ENCODE measurements at regions of chr10 and their contacts with region 1.

Region 1: DNA sequence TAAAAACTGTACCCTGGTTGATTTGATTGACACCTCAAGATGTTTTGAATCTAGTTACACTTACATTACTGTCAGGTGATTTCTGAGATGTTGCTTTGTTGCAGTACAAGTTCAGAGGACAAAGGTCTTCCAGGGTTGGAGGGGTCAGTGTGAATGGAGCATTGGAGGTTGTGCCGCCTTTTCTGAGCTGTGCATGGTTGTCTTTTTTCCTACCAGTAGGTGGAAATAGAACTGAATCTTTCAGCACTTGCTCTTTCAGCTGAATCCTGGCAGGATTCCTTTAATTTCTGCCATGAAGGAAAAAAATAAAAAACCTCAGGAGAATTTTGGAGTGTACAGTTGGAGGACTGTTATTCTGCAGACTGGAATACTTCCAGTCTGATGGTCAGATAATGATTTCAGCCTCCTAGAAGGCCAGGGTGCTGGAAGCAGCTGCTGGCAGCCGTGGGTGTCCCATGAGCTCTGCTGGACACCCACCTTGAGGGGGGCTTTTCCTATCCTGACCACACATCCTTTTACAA is 82.7 kb downstream of the PLCE1 start:
- DNase-seq: peak in 1 of 7 donors; percentile 7
- H3K4me3 ChIP-seq: no peak overlapping the region
- H3K27ac ChIP-seq: no peak overlapping the region
- H3K4me1 ChIP-seq: peaks cover 0 to 8% of the 10 kb centered on the region in 2 donors
- H3K27me3 ChIP-seq: no peaks in the 10 kb centered on the region
- CTCF ChIP-seq: peak; percentile 28 to 70 (median 59)
- POLR2A ChIP-seq: no peak

Region 2: DNA sequence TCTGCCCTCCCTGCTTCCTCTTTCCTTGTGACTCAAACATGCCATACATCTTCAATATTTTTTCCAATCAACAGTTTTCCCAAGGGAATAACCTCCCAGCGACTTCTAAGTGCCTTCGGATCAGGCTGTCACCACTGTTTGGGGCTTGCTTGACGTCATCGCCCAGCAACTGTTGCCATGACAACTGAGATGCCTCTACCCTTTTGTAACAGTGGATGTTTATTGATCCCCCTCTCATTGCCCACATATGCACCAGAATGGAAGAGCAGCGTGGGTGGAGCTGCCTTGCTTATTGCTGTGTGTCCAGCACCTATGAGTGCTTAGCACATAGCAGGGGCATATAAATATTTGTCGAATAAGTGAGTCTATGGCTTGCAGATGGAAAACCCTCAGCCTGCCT is 495.6 kb before region 1 on chr10:
- intact Hi-C with region 1: no loop called
- DNase-seq: no peak
- H3K4me3 ChIP-seq: no peak overlapping the region
- H3K27ac ChIP-seq: no peak overlapping the region
- H3K4me1 ChIP-seq: no peaks in the 10 kb centered on the region
- H3K27me3 ChIP-seq: no peaks in the 10 kb centered on the region
- CTCF ChIP-seq: no peak
- POLR2A ChIP-seq: no peak

Region 3: GRCh38 chr10:94016730-94017714 is 59.4 kb before region 1 on chr10:
- intact Hi-C with region 1: no loop called
- DNase-seq: peak in 5 of 7 donors; percentile 19 to 52 (median 38)
- H3K4me3 ChIP-seq: no peak overlapping the region
- H3K27ac ChIP-seq: no peak overlapping the region
- H3K4me1 ChIP-seq: no peaks in the 10 kb centered on the region
- H3K27me3 ChIP-seq: no peaks in the 10 kb centered on the region
- CTCF ChIP-seq: no peak
- POLR2A ChIP-seq: no peak

Region 4: DNA sequence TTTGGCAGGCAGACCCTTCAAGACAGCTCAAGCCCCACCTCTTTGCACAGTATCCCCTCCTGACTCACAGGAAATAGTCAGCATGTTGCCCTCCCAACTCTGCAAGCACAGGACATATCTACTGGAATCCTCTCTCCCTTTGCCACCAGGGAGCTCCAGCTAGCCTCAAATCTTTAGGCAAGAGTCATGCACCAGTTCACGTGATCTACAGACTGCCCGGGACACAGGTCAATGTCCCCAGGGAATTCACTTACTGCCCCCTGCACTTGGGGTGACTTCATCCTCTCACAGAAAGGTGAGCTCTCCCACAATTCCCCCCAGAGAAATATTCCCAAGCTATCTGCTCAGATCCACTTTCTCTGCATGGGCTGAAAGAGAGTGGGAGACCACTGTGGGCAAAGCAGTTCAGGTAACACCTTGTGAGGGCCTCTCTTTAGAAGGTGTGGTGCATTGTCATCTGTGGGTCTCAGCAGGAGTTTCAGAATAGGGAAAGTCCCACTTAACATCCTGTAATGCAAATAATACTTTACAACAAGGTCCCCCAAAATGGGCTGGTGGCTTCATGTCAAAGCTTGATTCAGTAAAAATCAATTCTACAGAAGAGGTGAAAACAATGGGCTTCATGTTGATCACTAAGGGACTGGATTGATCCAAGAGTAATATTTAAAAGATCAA is 156.5 kb after region 1 on chr10:
- intact Hi-C with region 1: loop called in 1 of 2 experiments (anchors 10 kb)
- DNase-seq: no peak
- H3K4me3 ChIP-seq: no peak overlapping the region
- H3K27ac ChIP-seq: no peak overlapping the region
- H3K4me1 ChIP-seq: peaks cover 0 to 15% of the 10 kb centered on the region in 2 donors
- H3K27me3 ChIP-seq: no peaks in the 10 kb centered on the region
- CTCF ChIP-seq: no peak
- POLR2A ChIP-seq: no peak

Region 5: DNA sequence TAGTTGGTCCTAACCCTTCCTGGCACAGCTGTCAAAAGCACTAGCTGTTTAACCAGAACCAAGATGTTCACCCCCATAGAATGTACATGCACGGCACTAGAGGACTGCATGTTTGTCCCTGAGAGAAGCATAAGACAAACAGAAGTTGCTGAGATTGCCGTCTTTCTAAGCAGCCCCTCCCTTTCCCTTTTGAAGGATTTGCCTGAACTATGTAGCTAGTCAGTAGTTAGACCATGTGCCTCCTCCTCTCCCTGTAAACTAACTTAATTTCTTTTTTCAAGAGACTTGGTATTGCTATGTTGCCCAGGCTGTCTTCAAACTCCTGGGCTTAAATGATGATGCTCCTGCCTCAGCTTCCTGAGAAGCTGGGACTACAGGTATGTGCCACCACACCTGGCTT is 366.7 kb after region 1 on chr10:
- intact Hi-C with region 1: loop called in 1 of 2 experiments (anchors 10 kb)
- DNase-seq: no peak
- H3K4me3 ChIP-seq: no peak overlapping the region
- H3K27ac ChIP-seq: no peak overlapping the region
- H3K4me1 ChIP-seq: peaks cover 0 to 15% of the 10 kb centered on the region in 2 donors
- H3K27me3 ChIP-seq: no peaks in the 10 kb centered on the region
- CTCF ChIP-seq: no peak
- POLR2A ChIP-seq: no peak